Calu3 (cell line): ENCODE measurements at regions of chr4 and their contacts with region 1.

Region 1: DNA sequence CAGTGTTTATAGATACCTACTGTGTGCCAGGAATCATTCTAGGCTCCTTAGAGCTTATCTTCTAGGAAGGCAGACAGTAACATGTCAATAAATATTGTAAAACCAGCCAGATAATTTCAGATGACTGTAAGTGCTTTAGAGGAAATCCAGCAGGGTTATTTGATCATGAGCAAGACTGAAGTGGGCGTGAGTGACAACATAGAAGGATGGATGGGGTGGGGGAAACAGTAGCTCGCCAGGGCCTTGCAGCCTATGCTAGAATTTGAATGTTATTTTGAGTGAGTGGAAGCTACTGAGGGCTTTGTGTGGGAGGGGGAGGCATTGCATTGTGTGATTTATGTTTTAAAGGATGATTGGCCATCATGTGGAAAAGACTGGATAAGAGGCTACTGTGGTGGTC is 6.7 kb downstream of the SRD5A3 start:
- DNase-seq: no peak
- H3K4me3 Mint-ChIP-seq: no peak overlapping the region
- H3K27ac Mint-ChIP-seq: no peak overlapping the region
- H3K4me1 Mint-ChIP-seq: peaks cover 17% of the 10 kb centered on the region
- H3K27me3 Mint-ChIP-seq: no peaks in the 10 kb centered on the region
- CTCF ChIP-seq: no peak

Region 2: DNA sequence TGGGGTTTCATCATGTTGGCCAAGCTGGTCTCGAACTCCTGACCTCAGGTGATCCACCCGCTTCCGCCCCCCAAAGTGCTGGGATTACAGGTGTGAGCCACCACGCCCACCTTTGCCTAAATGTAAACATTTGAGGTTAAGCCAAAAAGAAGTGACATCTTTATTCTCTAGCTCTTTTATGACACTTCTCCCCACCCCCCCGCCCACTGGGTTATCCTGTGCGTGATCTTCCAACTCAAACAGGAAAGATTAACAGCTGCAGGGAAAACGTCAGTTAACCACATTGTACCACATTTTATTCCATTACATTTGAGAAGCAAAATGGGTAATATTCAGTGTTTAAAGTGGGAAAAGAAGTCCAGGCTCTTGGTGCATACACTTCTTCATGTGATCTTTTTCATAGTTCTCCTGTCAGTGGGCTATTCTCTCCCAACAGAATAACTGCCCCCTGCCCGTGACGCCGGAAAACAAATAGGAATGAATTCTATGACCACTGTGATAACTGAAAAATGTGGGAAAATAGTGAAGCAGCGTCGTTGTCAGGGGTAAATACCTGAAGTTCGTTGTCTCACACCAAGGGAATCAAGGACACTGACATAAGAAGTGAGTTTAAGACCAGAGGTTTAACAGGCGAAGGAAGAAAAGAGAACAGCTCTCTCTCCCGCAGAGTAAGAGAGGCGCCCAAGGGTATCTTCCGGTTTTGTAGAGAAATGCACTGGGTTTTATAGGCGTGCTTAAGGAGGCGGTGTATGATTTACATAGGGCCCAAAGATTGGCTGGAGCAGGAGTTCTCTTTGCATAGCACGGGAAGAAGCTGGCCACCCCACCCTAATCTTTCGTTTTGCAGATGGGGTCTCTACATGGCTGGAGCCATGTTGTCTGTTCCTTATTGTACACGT is 16.3 kb before region 1 on chr4:
- CTCF ChIA-PET with region 1: interaction called, 10 read pairs
- intact Hi-C with region 1: no loop called
- DNase-seq: no peak
- H3K4me3 Mint-ChIP-seq: no peak overlapping the region
- H3K27ac Mint-ChIP-seq: no peak overlapping the region
- H3K4me1 Mint-ChIP-seq: no peaks in the 10 kb centered on the region
- H3K27me3 Mint-ChIP-seq: no peaks in the 10 kb centered on the region
- CTCF ChIP-seq: no peak

Region 3: DNA sequence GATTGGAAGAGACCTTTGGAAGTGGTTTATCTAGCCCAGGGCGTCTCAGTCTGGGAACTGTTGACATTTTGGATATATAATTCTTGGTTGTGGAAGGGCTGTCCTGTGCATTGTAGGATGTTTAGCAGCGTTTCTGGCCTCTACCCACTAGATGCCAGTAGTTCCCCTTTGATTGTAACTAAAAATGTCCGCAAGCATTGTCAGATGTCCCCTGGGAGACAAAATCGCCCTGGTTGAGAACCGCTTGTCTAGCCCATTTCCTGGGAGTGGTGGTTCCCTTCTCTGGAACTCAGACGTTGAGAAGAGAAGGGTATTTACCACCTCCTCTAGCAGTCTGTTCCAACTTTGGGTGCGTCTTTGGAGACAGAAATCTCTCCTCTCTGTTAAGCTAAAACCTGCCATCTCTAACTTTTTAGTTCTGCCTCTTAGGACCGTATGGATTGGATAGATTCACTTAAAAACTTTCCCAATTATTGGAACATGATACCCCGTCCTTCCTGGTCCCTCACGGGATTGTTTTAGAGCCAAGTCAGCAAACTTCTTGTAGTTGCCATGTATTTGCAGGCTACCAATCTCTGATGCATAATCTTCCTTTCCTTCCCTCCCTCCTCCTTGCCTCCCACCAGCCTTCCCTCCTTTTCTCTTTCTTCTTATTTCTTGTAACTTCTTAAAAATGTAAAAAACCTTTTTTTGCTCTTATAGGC is 56.9 kb after region 1 on chr4:
- CTCF ChIA-PET with region 1: no interaction called
- intact Hi-C with region 1: no loop called
- DNase-seq: no peak
- H3K4me3 Mint-ChIP-seq: no peak overlapping the region
- H3K27ac Mint-ChIP-seq: peak overlapping the region; percentile 23
- H3K4me1 Mint-ChIP-seq: peaks cover 25% of the 10 kb centered on the region
- H3K27me3 Mint-ChIP-seq: no peaks in the 10 kb centered on the region
- CTCF ChIP-seq: no peak